T-cell (primary cell): ENCODE measurements at regions of chr12 and their contacts with region 1.

Region 1: DNA sequence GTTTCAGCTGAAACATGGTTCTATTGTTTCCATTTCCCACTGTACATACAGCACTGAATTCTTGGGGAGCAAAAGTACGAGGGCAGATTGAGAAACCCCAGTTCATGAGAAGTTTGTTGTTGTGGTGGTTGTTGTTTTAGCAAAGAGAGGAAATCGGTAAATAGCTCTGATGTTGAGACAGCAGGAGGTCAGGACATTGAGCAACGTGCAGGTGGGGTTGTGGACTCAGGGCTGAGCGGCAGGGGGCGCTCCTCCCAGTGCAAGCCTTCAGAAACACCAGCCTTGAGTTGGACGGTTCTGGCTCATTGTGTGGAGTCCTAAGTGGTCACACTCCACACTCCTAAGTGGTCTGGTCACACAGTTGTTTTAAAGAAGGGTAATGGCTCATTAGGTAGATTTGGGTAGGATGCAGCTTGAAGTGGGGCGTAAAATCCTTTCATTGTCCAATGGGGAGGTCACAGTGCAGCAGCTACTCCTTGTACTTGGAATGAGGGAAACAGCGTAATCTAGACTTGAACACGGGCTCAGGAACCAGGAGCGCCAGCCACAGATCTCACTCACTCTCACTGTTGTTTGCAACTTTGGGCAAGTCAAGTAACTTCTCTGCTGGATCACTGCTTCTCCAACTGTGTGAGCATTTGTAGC is 14.5 kb upstream of the PWP1 start:
- DNase-seq: peak in 14 of 35 experiments; percentile 5 to 56 (median 16)
- ATAC-seq: peak in 1 of 4 experiments; percentile 36
- H3K4me3 ChIP-seq: no peak overlapping the region
- H3K4me3 Mint-ChIP-seq: no peak overlapping the region
- H3K27ac ChIP-seq: no peak overlapping the region
- H3K27ac Mint-ChIP-seq: no peak overlapping the region
- H3K4me1 ChIP-seq: no peaks in the 10 kb centered on the region
- H3K4me1 Mint-ChIP-seq: peaks cover 2 to 6% (median 2%) of the 10 kb centered on the region in 3 donors
- H3K27me3 ChIP-seq: peaks cover 0 to 18% of the 10 kb centered on the region in 2 experiments
- H3K27me3 Mint-ChIP-seq: peaks cover 10 to 17% of the 10 kb centered on the region in 2 donors

Region 2: GRCh38 chr12:107653519-107653918 is 17.6 kb before region 1 on chr12:
- CTCF ChIA-PET with region 1: no interaction called
- POLR2A ChIA-PET with region 1: no interaction called
- DNase-seq: no peak
- ATAC-seq: no peak
- H3K4me3 ChIP-seq: no peak overlapping the region
- H3K4me3 Mint-ChIP-seq: no peak overlapping the region
- H3K27ac ChIP-seq: no peak overlapping the region
- H3K27ac Mint-ChIP-seq: no peak overlapping the region
- H3K4me1 ChIP-seq: no peaks in the 10 kb centered on the region
- H3K4me1 Mint-ChIP-seq: peaks cover 0 to 6% (median 0%) of the 10 kb centered on the region in 3 donors
- H3K27me3 ChIP-seq: no peaks in the 10 kb centered on the region
- H3K27me3 Mint-ChIP-seq: no peaks in the 10 kb centered on the region

Region 3: DNA sequence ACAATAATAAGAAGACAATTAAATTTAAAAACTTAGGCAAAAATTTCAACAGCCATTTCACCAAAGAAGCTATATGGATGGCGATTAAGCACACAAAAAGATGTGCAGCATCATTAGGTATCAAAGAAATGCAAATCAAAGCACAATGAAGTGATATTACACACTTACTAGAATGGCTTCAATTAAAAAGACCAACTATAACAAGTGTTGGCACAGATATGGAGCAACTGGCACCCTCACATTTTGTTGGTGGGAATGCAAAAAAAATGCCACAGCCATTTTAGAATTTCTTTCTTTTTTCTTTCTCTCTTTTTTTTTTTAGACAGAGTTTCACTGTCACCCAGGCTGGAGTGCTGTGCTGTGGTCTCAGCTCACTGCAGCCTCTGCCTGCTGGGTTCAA is 91.8 kb after region 1 on chr12:
- CTCF ChIA-PET with region 1: interaction called, 7 to 11 read pairs
- POLR2A ChIA-PET with region 1: no interaction called
- DNase-seq: no peak
- ATAC-seq: no peak
- H3K4me3 ChIP-seq: no peak overlapping the region
- H3K4me3 Mint-ChIP-seq: no peak overlapping the region
- H3K27ac ChIP-seq: no peak overlapping the region
- H3K27ac Mint-ChIP-seq: no peak overlapping the region
- H3K4me1 ChIP-seq: peaks cover 17 to 23% of the 10 kb centered on the region in 2 experiments
- H3K4me1 Mint-ChIP-seq: peaks cover 29 to 32% (median 31%) of the 10 kb centered on the region in 3 donors
- H3K27me3 ChIP-seq: no peaks in the 10 kb centered on the region
- H3K27me3 Mint-ChIP-seq: no peaks in the 10 kb centered on the region

Region 4: GRCh38 chr12:107884769-107885694 is 213.9 kb after region 1 on chr12:
- CTCF ChIA-PET with region 1: interaction called in 1 of 2 experiments, 10 read pairs
- POLR2A ChIA-PET with region 1: no interaction called
- DNase-seq: peak in 17 of 35 experiments; percentile 2 to 56 (median 9)
- ATAC-seq: no peak
- H3K4me3 ChIP-seq: no peak overlapping the region
- H3K4me3 Mint-ChIP-seq: no peak overlapping the region
- H3K27ac ChIP-seq: no peak overlapping the region
- H3K27ac Mint-ChIP-seq: peak overlapping the region in 1 of 2 donors; percentile 38
- H3K4me1 ChIP-seq: no peaks in the 10 kb centered on the region
- H3K4me1 Mint-ChIP-seq: peaks cover 0 to 4% (median 0%) of the 10 kb centered on the region in 3 donors
- H3K27me3 ChIP-seq: peaks cover 4 to 8% of the 10 kb centered on the region in 2 experiments
- H3K27me3 Mint-ChIP-seq: peaks cover 13 to 21% of the 10 kb centered on the region in 2 donors